ENCODE measurements at regions of chr4 and their contacts with region 1.

Region 1: GRCh38 chr4:27048429-27049238 is 188.0 kb downstream of the STIM2 start:
- DNase-seq: no peak
- H3K4me3 ChIP-seq: peak overlapping the region; percentile 11 to 44 (median 38)
- H3K27ac ChIP-seq: no peak overlapping the region
- H3K4me1 ChIP-seq: peaks cover 0 to 7% (median 5%) of the 10 kb centered on the region in 4 donors
- H3K27me3 ChIP-seq: peaks cover 0 to 3% (median 0%) of the 10 kb centered on the region in 3 donors
- CTCF ChIP-seq: peak; percentile 18 to 73 (median 58)
- EP300 ChIP-seq: no peak
- POLR2A ChIP-seq: no peak

Region 2: DNA sequence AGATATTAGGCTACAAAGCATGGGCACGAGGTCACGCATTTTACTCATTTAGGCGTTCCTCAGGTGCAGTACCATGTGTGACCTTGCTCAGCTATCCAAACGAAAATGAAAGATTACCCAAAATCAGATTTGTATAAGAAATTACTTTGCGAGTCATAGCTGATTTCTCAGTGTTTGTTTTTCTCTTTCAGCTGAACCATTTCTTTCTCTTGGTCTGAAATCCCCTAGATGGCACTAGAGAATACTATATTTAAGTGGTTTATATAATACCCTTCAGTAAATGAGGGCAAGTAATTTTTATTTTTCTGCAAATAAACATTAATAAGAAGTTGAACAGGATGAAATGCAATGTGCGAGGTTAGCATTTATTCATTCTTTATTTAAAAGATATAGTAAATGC is 308.6 kb after region 1 on chr4:
- intact Hi-C with region 1: loop called (anchors 10 kb)
- DNase-seq: no peak
- H3K4me3 ChIP-seq: no peak overlapping the region
- H3K27ac ChIP-seq: no peak overlapping the region
- H3K4me1 ChIP-seq: peaks cover 0 to 18% (median 14%) of the 10 kb centered on the region in 4 donors
- H3K27me3 ChIP-seq: no peaks in the 10 kb centered on the region
- CTCF ChIP-seq: peak in 2 of 4 experiments; percentile 7 to 38
- EP300 ChIP-seq: no peak
- POLR2A ChIP-seq: no peak